MCF 10A (cell line): ENCODE measurements at regions of chr12 and their contacts with region 1.

Region 1: DNA sequence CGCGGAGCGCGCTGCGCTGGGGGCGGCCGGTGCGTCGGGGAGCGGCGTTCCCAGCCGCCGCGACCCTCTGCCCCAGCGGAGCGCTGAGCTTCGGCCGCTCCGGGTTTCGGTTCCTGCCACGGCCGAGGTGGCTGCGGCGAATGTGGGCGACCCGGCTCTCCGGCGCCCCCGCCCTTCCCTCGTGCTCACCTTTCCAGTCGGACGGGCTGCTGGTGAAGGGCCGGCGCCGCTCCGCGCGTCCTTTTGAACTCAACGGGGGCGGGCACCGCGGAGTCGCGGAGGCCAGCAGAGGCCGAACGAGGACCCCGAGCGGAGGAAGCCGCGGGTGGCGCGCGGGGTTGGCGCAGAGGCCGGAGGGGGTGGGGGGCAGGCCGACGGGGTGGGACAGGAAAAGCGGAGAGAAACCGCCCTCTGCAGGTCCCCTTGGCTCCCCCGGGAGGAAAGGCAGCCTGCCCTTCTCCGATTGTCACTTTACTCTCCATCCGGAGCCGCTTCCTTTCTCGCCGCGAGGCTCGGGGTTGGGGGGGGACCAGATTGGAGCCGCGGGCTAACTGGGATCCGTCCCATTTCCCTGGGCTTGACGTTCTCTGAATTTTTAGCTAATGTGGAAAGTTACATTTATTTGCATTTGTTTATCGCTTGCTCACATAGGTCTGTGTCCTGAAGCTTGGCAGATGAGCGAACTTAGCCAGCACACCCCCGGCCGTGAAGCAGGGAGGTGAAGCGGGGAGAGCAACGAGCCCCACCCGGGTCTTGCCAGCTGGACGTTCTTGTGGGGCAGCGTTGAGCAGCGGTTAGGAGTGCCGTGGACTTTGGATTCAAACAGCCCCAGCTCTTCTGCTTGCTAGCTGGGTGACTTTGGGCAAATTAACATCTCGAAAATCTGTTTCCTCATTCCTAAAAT is at the start of gene SMAGP:
- DNase-seq: peak; percentile 44
- H3K4me3 Mint-ChIP-seq: peak within 1 kb of the TSS; percentile 87
- H3K27ac Mint-ChIP-seq: peak within 1 kb of the TSS; percentile 74
- H3K4me1 Mint-ChIP-seq: peaks cover 17% of the 10 kb centered on the region
- H3K27me3 Mint-ChIP-seq: no peaks in the 10 kb centered on the region
- CTCF ChIP-seq: no peak
- total RNA-seq, gene SMAGP: 17.4 and 19.0 TPM in 2 replicates

Region 2: GRCh38 chr12:51281202-51281924 is 11.0 kb after region 1 on chr12:
- CTCF ChIA-PET with region 1: interaction called, 5 read pairs
- POLR2A ChIA-PET with region 1: interaction called, 11 read pairs
- intact Hi-C with region 1: no loop called
- DNase-seq: peak; percentile 35
- H3K4me3 Mint-ChIP-seq: no peak overlapping the region
- H3K27ac Mint-ChIP-seq: no peak overlapping the region
- H3K4me1 Mint-ChIP-seq: no peaks in the 10 kb centered on the region
- H3K27me3 Mint-ChIP-seq: no peaks in the 10 kb centered on the region
- CTCF ChIP-seq: no peak

Region 3: GRCh38 chr12:51307655-51308593 is 37.6 kb after region 1 on chr12:
- CTCF ChIA-PET with region 1: no interaction called
- POLR2A ChIA-PET with region 1: interaction called, 3 read pairs
- intact Hi-C with region 1: loop called (anchors 5 kb)
- DNase-seq: peak; percentile 74
- H3K4me3 Mint-ChIP-seq: peak overlapping the region; percentile 9
- H3K27ac Mint-ChIP-seq: peak overlapping the region; percentile 14
- H3K4me1 Mint-ChIP-seq: peaks cover 14% of the 10 kb centered on the region
- H3K27me3 Mint-ChIP-seq: no peaks in the 10 kb centered on the region
- CTCF ChIP-seq: no peak